ENCODE measurements at regions of chr17 and their contacts with region 1.

Region 1: DNA sequence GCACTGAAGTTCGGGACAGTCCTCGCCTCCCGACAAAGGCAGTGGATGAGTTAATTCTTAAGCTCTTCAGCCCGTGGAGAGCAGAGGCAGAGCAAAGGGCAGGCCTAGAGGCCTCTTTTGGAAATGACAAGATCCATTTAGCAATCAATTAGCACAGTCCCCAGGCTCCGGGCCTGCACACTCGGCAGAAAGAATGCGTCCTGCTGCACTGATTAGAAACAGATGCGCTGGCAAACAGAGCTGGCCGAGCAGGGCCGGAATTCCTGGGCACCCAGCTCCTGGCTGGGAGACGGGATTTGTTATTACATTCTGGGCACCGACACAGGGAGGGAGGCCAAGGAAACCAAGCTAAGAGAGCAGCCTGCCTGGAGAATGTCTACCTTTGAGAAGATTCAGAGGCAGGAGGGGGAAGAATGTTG is 162.9 kb downstream of the COPRS start:
- DNase-seq: peak; percentile 29 to 66 (median 33)
- ATAC-seq: peak; percentile 34
- H3K4me3 ChIP-seq: no peak overlapping the region
- H3K4me1 ChIP-seq: no peaks in the 10 kb centered on the region
- CTCF ChIP-seq: no peak

Region 2: GRCh38 chr17:31558748-31559644 is 137.2 kb before region 1 on chr17:
- intact Hi-C with region 1: loop called in 1 of 2 experiments (anchors 5 kb)
- DNase-seq: peak; percentile 77 to 88 (median 81)
- ATAC-seq: peak; percentile 93
- H3K4me3 ChIP-seq: peak overlapping the region; percentile 26
- H3K4me1 ChIP-seq: peaks cover 27% of the 10 kb centered on the region
- CTCF ChIP-seq: peak; percentile 77